Mammary epithelial cell (primary cell): ENCODE measurements at regions of chr1 and their contacts with region 1.

Region 1: DNA sequence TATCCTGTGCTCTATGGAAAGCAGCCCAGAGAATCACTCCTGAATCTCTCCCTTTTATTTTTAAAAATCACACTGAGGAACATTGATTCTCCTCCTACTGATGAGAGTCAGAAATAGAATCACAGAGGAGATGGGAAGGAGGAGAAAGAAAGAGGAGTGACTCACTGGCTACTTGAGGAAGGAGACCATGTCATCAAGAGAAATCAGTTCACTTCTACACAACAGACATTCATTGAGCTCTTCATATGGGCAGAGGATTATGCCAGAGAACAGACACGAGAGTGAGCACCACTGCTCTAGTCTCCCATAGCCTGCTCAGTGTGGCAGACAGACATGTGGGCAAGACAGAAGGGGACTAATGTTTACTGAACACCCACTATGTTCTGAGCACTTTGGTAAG is 44.2 kb downstream of the RAB3B start:
- DNase-seq: no peak
- H3K4me3 ChIP-seq: no peak overlapping the region
- H3K27ac ChIP-seq: no peak overlapping the region
- H3K4me1 ChIP-seq: peaks cover 13% of the 10 kb centered on the region
- H3K27me3 ChIP-seq: no peaks in the 10 kb centered on the region
- CTCF ChIP-seq: no peak

Region 2: GRCh38 chr1:51359879-51360278 is 586.4 kb before region 1 on chr1:
- CTCF ChIA-PET with region 1: no interaction called
- dilution Hi-C with region 1: no loop called
- in situ Hi-C with region 1: no loop called
- intact Hi-C with region 1: no loop called
- DNase-seq: no peak
- H3K4me3 ChIP-seq: no peak overlapping the region
- H3K27ac ChIP-seq: no peak overlapping the region
- H3K4me1 ChIP-seq: no peaks in the 10 kb centered on the region
- H3K27me3 ChIP-seq: no peaks in the 10 kb centered on the region
- CTCF ChIP-seq: no peak

Region 3: DNA sequence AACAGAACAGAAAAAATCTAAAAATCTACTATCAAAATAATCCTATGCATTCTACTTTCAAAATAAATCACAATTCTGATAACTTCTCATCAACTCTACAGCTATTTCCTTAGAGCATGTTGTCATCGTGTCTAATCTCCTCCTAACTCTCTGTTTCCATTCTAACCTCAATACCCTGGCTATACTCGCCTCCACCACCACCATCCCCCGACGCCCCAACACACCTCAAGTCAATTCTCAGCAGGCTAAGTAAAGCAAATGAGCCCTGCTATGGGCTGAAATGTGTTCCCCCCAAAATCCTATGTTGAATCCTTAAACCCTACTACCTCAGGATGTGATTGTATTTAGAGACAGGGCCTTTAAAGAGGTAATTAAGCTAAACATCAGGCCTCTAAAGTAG is 102.4 kb before region 1 on chr1:
- CTCF ChIA-PET with region 1: no interaction called
- dilution Hi-C with region 1: no loop called
- in situ Hi-C with region 1: no loop called
- intact Hi-C with region 1: no loop called
- DNase-seq: no peak
- H3K4me3 ChIP-seq: no peak overlapping the region
- H3K27ac ChIP-seq: no peak overlapping the region
- H3K4me1 ChIP-seq: no peaks in the 10 kb centered on the region
- H3K27me3 ChIP-seq: no peaks in the 10 kb centered on the region
- CTCF ChIP-seq: no peak

Region 4: GRCh38 chr1:51989723-51990477 is 43.6 kb after region 1 on chr1:
- CTCF ChIA-PET with region 1: no interaction called
- dilution Hi-C with region 1: loop called (anchors 5 kb)
- in situ Hi-C with region 1: no loop called
- intact Hi-C with region 1: no loop called
- DNase-seq: no peak
- H3K4me3 ChIP-seq: peak overlapping the region; percentile 0 to 55 (median 49)
- H3K27ac ChIP-seq: no peak overlapping the region
- H3K4me1 ChIP-seq: no peaks in the 10 kb centered on the region
- H3K27me3 ChIP-seq: no peaks in the 10 kb centered on the region
- CTCF ChIP-seq: no peak